ENCODE measurements at regions of chr17 and their contacts with region 1.

Region 1: DNA sequence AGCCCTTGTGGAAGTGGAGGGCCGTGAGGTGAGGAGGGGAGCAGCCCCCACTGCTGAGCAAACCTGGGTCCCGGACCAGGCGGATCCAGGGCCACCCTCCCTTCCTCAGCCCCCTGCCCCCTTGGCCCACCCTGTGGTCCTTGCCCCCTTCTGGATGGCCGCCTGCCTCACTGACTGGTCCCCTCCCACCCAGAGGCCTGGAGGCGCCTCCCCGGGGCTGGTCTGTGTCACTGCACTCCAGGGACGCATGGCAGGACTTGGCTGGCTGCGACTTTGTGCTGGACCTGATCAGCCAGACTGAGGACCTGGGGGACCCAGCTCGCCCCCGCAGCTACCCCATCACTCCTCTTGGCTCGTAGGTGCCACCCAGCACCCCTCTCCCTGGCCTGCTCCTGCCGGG is 19.2 kb upstream of the SMIM5 start:
- DNase-seq: no peak
- ATAC-seq: peak; percentile 62
- H3K4me3 ChIP-seq: no peak overlapping the region
- H3K27ac ChIP-seq: no peak overlapping the region
- H3K4me1 ChIP-seq: peaks cover 45% of the 10 kb centered on the region
- H3K27me3 ChIP-seq: no peaks in the 10 kb centered on the region; a peak in 1 of 5 replicates
- CTCF ChIP-seq: peak; percentile 78
- EP300 ChIP-seq: no peak
- POLR2A ChIP-seq: no peak
- RAD21 ChIP-seq: peak; percentile 60

Region 2: GRCh38 chr17:75601057-75602051 is 12.7 kb before region 1 on chr17:
- CTCF ChIA-PET with region 1: interaction called, 18 read pairs
- POLR2A ChIA-PET with region 1: interaction called, 40 read pairs
- in situ Hi-C with region 1: no loop called
- intact Hi-C with region 1: no loop called
- DNase-seq: peak; percentile 77
- ATAC-seq: peak; percentile 83
- H3K4me3 ChIP-seq: no peak overlapping the region
- H3K27ac ChIP-seq: no peak overlapping the region
- H3K4me1 ChIP-seq: peaks cover 9% of the 10 kb centered on the region; the same call in 1 of the 2 replicates
- H3K27me3 ChIP-seq: peaks cover 6 to 27% of the 10 kb centered on the region in 2 experiments
- CTCF ChIP-seq: peak; percentile 96
- EP300 ChIP-seq: no peak
- POLR2A ChIP-seq: no peak
- RAD21 ChIP-seq: peak; percentile 78

Region 3: GRCh38 chr17:75625813-75626486 is 11.9 kb after region 1 on chr17:
- CTCF ChIA-PET with region 1: no interaction called
- POLR2A ChIA-PET with region 1: interaction called, 16 read pairs
- in situ Hi-C with region 1: no loop called
- intact Hi-C with region 1: no loop called
- DNase-seq: peak; percentile 56
- ATAC-seq: peak; percentile 85
- H3K4me3 ChIP-seq: no peak overlapping the region
- H3K27ac ChIP-seq: no peak overlapping the region
- H3K4me1 ChIP-seq: peaks cover 6% of the 10 kb centered on the region; the same call in 1 of the 2 replicates
- H3K27me3 ChIP-seq: no peaks in the 10 kb centered on the region
- CTCF ChIP-seq: peak; percentile 85
- EP300 ChIP-seq: no peak; a peak in 1 of 4 replicates
- POLR2A ChIP-seq: no peak
- RAD21 ChIP-seq: no peak; the same call in 1 of the 2 replicates

Region 4: DNA sequence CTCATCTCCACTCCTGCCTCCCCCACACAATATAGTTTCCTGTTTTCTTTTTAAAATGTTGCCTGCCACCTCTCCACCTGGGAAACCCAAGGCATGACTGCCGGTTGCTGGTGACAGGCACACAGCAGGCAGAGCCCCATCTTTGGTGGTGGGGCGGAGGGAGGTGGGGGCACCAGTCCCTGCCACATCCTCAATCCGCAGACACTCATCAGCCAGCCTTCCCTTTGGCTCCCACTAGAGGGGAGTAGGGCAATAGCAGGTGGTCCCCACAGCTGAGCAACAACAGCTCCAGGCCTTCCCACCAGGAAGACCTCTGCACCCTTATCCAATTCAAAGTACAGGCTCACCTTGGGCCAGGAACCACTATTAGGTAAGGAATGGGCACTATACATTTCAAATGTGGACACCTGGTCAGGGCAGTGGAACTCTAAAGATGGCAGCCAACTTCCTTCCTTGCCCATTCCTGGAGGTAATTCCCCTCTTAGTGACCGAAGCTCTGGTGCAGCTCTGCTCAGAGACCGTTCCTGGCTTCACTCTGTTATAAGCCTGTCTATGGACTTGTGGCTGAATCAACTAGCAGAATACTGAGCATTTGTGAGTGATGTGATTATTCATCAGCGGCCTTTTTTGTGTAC is 39.0 kb after region 1 on chr17:
- CTCF ChIA-PET with region 1: no interaction called
- POLR2A ChIA-PET with region 1: no interaction called
- in situ Hi-C with region 1: no loop called
- intact Hi-C with region 1: no loop called
- DNase-seq: peak; percentile 59
- ATAC-seq: peak; percentile 94
- H3K4me3 ChIP-seq: no peak overlapping the region
- H3K27ac ChIP-seq: no peak overlapping the region
- H3K4me1 ChIP-seq: peaks cover 4% of the 10 kb centered on the region; the same call in 1 of the 2 replicates
- H3K27me3 ChIP-seq: no peaks in the 10 kb centered on the region
- CTCF ChIP-seq: peak; percentile 90
- EP300 ChIP-seq: no peak
- POLR2A ChIP-seq: no peak
- RAD21 ChIP-seq: peak; percentile 76

Measured in HepG2 (cell line).